ENCODE measurements at regions of chr15 and their contacts with region 1.

Region 1: DNA sequence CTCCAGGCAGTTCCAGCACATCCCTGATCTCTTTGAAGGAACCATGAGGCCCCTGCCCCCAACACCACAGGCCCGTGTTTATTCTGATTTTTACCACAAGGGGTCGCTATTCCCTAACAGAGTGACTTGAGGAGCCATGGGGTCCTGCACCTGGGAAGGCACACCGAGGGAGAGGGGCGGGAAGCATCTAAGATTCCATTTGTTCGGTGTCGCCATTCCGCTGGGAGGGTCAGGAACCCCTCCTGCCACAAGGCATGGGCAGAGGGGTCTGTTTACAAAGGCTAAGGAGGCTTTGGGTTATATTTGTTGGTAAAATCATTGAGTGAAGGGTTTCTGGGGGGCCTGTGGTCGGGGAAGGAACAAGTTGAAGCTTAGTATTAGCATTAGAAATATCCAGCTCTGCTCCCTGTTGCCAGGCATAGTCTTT is 77.1 kb downstream of the WDR76 start:
- DNase-seq: peak; percentile 81
- H3K4me3 ChIP-seq: no peak overlapping the region
- H3K27ac ChIP-seq: no peak overlapping the region
- H3K4me1 ChIP-seq: peaks cover 0 to 30% of the 10 kb centered on the region in 2 experiments; a peak in 1 of 4 replicates
- H3K27me3 ChIP-seq: no peaks in the 10 kb centered on the region
- CTCF ChIP-seq: peak; percentile 89
- EP300 ChIP-seq: no peak
- RAD21 ChIP-seq: peak; percentile 92

Region 2: DNA sequence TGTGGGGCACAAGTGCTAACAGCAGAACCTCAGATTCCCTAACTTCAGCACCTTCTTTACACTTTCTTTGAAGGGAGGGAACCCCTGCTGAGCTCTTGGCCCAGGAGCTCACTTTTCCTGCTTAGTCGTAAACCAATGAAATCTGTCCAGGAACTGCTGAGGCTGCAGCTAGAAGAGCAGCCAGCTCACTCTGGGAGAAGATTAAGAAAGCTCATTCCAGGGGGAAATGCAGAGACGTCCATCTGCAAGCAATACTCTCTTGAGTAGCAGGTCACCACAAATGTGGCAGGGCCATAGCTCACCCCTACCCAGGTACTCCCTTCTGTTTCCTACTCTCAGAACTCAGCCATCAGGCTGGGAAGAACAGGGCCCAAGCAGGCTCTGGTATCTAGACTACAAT is 26.2 kb after region 1 on chr15:
- CTCF ChIA-PET with region 1: interaction called, 19 read pairs
- POLR2A ChIA-PET with region 1: no interaction called
- DNase-seq: no peak
- H3K4me3 ChIP-seq: no peak overlapping the region
- H3K27ac ChIP-seq: no peak overlapping the region
- H3K4me1 ChIP-seq: peaks cover 13 to 33% of the 10 kb centered on the region in 2 experiments; a peak in 3 of 4 replicates
- H3K27me3 ChIP-seq: no peaks in the 10 kb centered on the region
- CTCF ChIP-seq: no peak
- EP300 ChIP-seq: no peak
- RAD21 ChIP-seq: no peak

Region 3: GRCh38 chr15:44066316-44066740 is 162.5 kb after region 1 on chr15:
- CTCF ChIA-PET with region 1: interaction called, 14 read pairs
- POLR2A ChIA-PET with region 1: no interaction called
- DNase-seq: peak; percentile 8
- H3K4me3 ChIP-seq: no peak overlapping the region
- H3K27ac ChIP-seq: no peak overlapping the region; a peak in 1 of 4 replicates
- H3K4me1 ChIP-seq: no peaks in the 10 kb centered on the region; a peak in 1 of 4 replicates
- H3K27me3 ChIP-seq: no peaks in the 10 kb centered on the region
- CTCF ChIP-seq: peak; percentile 80
- EP300 ChIP-seq: no peak
- RAD21 ChIP-seq: peak; percentile 64

Region 4: DNA sequence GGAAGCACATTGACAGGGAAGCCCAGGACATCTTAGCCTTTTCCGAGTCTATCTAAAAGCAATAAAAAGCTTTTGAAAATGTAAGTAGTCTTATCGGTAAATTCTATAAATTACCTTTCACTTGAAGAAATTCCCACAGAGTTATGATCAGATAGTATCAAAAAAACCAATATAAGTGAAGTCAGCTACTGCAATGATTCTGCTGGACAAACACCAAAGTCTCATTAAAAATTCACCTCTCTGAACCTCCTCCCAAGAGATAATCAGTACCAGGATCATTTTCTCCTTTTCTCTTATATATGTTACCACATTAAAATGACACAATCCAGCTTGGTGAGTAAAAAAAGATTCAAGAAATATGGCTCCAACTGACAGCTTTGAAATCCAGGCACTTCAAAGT is 222.0 kb after region 1 on chr15:
- CTCF ChIA-PET with region 1: interaction called, 10 read pairs
- POLR2A ChIA-PET with region 1: no interaction called
- DNase-seq: no peak
- H3K4me3 ChIP-seq: no peak overlapping the region
- H3K27ac ChIP-seq: no peak overlapping the region
- H3K4me1 ChIP-seq: no peaks in the 10 kb centered on the region
- H3K27me3 ChIP-seq: no peaks in the 10 kb centered on the region
- CTCF ChIP-seq: no peak
- EP300 ChIP-seq: no peak
- RAD21 ChIP-seq: no peak

Region 5: GRCh38 chr15:44195151-44195740 is 291.4 kb after region 1 on chr15 and contains the start of gene FRMD5:
- CTCF ChIA-PET with region 1: interaction called, 23 read pairs
- POLR2A ChIA-PET with region 1: no interaction called
- DNase-seq: peak; percentile 98
- H3K4me3 ChIP-seq: peak within 1 kb of the TSS; percentile 84 to 99
- H3K27ac ChIP-seq: peak within 1 kb of the TSS; percentile 88 to 91
- H3K4me1 ChIP-seq: peaks cover 0 to 4% of the 10 kb centered on the region in 2 experiments; a peak in 2 of 4 replicates
- H3K27me3 ChIP-seq: no peaks in the 10 kb centered on the region
- CTCF ChIP-seq: peak; percentile 43
- EP300 ChIP-seq: no peak
- RAD21 ChIP-seq: peak; percentile 30; the same call in 1 of the 2 replicates
- polyA plus RNA-seq, gene FRMD5: 24.8 and 26.7 TPM in 2 replicates

Region 6: DNA sequence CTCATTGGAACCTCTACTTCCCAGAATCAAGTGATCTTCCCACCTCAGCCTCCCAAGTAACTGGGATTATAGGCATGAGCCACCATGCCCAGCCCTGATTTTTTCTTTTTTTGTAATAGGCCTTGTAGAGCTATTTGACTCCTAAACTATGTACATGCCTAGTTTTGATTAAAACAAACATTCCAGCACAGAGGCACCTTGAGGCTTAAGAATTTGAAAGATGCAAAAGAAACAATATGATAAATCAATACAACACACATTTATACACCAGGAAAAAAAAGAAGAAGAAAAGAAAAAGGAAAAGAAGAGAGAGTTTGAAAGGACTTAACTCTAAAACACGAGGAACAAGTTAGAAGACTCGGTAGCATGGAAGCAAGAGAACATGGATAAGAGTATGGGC is 305.1 kb after region 1 on chr15:
- CTCF ChIA-PET with region 1: interaction called, 27 read pairs
- POLR2A ChIA-PET with region 1: no interaction called
- DNase-seq: no peak
- H3K4me3 ChIP-seq: peak overlapping the region in 1 of 2 experiments; percentile 24; a peak in 1 of 4 replicates
- H3K27ac ChIP-seq: no peak overlapping the region
- H3K4me1 ChIP-seq: no peaks in the 10 kb centered on the region
- H3K27me3 ChIP-seq: no peaks in the 10 kb centered on the region
- CTCF ChIP-seq: no peak
- EP300 ChIP-seq: no peak
- RAD21 ChIP-seq: no peak

Region 7: DNA sequence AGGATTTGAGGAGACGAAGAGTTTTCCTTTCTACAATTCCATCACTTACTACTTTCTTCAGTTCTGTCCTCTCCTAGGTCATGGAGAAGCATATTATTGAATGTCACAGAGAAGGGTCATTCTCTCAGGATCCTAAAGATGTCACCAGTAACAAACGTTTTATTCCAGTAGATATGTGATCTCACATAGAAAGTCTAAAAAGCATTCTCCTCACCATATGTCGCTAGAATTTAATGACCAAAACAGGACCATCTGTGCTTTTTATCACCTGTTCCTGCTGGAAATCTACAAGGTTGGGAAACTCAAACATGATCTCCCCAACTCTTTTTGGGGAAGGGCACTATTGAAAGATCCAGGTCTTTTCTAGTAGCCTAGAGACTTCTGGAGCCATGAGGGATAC is 315.2 kb after region 1 on chr15:
- CTCF ChIA-PET with region 1: interaction called, 23 read pairs
- POLR2A ChIA-PET with region 1: no interaction called
- DNase-seq: no peak
- H3K4me3 ChIP-seq: no peak overlapping the region
- H3K27ac ChIP-seq: peak overlapping the region in 1 of 2 experiments; percentile 26; a peak in 1 of 4 replicates
- H3K4me1 ChIP-seq: peaks cover 0 to 15% of the 10 kb centered on the region in 2 experiments; a peak in 3 of 4 replicates
- H3K27me3 ChIP-seq: no peaks in the 10 kb centered on the region
- CTCF ChIP-seq: no peak
- EP300 ChIP-seq: no peak
- RAD21 ChIP-seq: 0 out of 2 replicates have a peak, but pooled peaks have one; percentile 3